ENCODE measurements at regions of chrX and their contacts with region 1.

Region 1: DNA sequence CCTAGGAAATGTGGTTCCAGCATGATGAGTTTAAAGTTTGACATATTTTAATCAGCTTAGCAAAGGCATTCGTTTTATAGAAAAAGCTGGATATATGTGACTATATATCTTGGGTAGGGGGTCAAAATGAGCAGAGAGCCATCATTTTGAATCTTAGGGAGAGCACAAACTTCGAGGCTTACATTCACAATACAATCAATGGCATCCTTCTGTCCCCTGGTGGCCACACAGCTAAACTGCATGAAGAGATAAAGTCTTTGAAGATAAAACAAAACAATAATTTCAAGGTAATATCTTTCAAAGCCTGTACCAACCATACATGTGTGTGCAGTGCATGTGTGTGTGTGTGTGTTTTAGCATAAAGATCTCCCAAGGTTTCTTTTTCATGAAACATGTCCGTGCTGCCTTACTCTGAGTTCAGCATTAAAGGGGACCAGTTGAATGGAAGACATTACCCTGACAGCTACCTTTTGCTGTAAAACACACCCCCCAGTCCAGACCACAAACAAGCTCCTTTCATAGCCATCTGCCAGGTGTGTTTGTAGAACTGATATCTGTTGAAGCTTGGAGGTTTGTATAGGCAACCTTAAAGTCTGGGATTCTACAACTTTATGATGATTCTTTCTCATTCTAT is 22.0 kb downstream of the DYNLT3 start:
- DNase-seq: no peak
- H3K4me3 ChIP-seq: no peak overlapping the region
- H3K27ac ChIP-seq: no peak overlapping the region
- H3K4me1 ChIP-seq: peaks cover 6 to 25% (median 10%) of the 10 kb centered on the region in 6 donors
- H3K27me3 ChIP-seq: no peaks in the 10 kb centered on the region
- CTCF ChIP-seq: peak; percentile 59 to 92 (median 76)
- POLR2A ChIP-seq: no peak

Region 2: DNA sequence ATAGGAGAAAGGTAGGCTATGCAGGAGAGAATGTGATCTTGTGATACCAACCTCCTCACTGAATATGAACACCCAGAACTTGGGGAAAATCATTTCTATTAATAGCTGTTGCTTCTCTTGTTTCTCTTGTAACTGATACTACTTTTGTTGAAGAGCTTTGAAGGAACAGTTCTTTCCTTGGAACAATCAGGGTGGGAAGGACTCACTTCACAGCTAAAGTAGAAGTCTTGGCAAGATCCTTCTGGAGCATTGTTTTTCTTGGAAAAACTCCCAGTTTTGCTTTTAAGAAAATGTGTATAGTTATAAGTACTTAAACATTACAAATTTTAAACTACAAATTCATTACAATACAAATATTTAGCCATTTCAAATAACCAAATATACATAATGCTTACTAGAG is 158.8 kb before region 1 on chrX:
- intact Hi-C with region 1: no loop called
- DNase-seq: no peak
- H3K4me3 ChIP-seq: no peak overlapping the region
- H3K27ac ChIP-seq: no peak overlapping the region
- H3K4me1 ChIP-seq: no peaks in the 10 kb centered on the region
- H3K27me3 ChIP-seq: no peaks in the 10 kb centered on the region
- CTCF ChIP-seq: no peak
- POLR2A ChIP-seq: no peak

Region 3: GRCh38 chrX:37745354-37745753 is 80.0 kb before region 1 on chrX:
- intact Hi-C with region 1: loop called (anchors 5 kb)
- DNase-seq: peak; percentile 93
- H3K4me3 ChIP-seq: peak overlapping the region in 1 of 8 donors; percentile 19
- H3K27ac ChIP-seq: peak overlapping the region in 7 of 8 donors; percentile 41 to 83 (median 78)
- H3K4me1 ChIP-seq: peaks cover 7 to 21% (median 14%) of the 10 kb centered on the region in 6 donors
- H3K27me3 ChIP-seq: peaks cover 0 to 6% (median 0%) of the 10 kb centered on the region in 7 donors
- CTCF ChIP-seq: peak; percentile 79 to 96 (median 85)
- POLR2A ChIP-seq: no peak